Calu3 (cell line): ENCODE measurements at regions of chr6 and their contacts with region 1.

Region 1: DNA sequence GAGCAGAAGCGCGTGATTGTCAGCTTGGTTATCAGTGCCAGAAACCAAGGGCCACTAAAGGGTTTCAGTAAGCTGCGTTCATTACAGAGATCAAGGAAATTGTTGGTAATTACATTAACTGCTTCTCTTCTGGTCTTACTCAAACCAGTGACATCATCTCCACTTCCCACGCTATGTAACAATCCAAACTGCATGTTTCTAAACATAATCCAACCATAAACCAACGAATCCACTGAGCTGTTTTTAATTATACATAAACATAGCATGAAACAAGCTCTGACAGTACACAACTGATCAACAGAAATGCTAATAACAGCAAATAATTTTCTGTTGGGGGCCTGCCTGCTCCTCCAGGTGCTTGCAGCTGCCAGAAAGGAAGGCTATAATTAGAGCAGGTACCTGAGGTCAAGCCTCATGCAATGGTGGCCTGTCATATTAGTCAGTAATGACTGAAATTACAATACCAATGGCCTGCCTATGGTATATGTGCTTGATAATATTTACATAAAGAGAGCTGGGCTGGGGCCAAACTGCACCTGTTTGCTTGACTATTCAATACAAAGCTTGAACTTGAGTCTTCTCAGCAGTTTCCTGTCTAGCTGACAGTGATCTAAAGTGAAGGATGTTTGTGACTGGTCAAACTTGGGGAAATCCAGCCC is 40.1 kb downstream of the ILRUN start:
- DNase-seq: peak; percentile 39
- H3K4me3 Mint-ChIP-seq: peak overlapping the region; percentile 69
- H3K27ac Mint-ChIP-seq: peak overlapping the region; percentile 90
- H3K4me1 Mint-ChIP-seq: peaks cover 42% of the 10 kb centered on the region
- H3K27me3 Mint-ChIP-seq: no peaks in the 10 kb centered on the region
- CTCF ChIP-seq: no peak

Region 2: DNA sequence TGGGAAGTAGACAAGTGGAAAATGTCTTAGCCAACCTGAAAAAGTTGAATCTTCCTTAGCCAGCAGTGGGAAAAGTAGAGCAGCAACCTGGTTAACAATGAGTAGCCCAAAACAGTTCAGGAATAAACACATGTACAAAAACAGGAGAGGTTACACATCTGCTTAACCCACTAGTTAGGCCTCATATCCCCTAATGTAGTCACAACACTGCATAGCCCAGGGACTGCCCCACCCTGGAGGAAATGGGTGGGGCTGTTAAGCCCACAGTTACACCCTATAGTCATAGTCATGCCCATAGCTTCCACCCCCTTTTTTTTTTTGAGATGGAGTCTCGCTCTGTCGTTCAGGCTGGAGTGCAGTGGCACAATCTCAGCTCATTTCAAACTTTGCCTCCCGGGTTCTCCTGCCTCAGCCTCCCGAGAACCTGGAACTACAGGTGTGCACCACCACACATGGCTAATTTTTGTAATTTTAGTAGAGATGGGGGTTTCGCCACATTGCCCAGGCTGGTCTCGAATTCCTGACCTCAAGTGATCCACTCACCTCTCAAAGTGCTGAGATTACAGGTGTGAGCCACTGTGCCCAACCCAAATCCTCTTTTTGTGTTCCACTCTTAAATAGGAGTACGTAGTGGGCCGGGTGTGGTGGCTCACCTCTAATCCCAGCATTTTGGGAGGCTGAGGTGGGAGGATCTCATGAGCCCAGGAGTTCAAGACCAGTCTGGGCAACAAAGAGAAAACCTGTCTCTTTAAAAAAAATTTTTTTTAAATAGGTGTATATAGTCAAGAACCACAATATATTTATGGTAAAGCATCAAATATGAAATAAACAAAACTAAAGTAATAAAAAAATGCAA is 15.5 kb after region 1 on chr6:
- CTCF ChIA-PET with region 1: interaction called, 18 read pairs
- intact Hi-C with region 1: no loop called
- DNase-seq: peak; percentile 47
- H3K4me3 Mint-ChIP-seq: no peak overlapping the region
- H3K27ac Mint-ChIP-seq: peak overlapping the region; percentile 61
- H3K4me1 Mint-ChIP-seq: peaks cover 56% of the 10 kb centered on the region
- H3K27me3 Mint-ChIP-seq: no peaks in the 10 kb centered on the region
- CTCF ChIP-seq: no peak

Region 3: GRCh38 chr6:34689737-34690136 is 33.2 kb after region 1 on chr6:
- CTCF ChIA-PET with region 1: no interaction called
- intact Hi-C with region 1: loop called (anchors 5 kb)
- DNase-seq: no peak
- H3K4me3 Mint-ChIP-seq: no peak overlapping the region
- H3K27ac Mint-ChIP-seq: no peak overlapping the region
- H3K4me1 Mint-ChIP-seq: peaks cover 24% of the 10 kb centered on the region
- H3K27me3 Mint-ChIP-seq: no peaks in the 10 kb centered on the region
- CTCF ChIP-seq: no peak

Region 4: GRCh38 chr6:34696739-34697543 is 40.4 kb after region 1 on chr6 and contains the start of gene ILRUN:
- CTCF ChIA-PET with region 1: interaction called, 11 read pairs
- intact Hi-C with region 1: loop called (anchors 5 kb)
- DNase-seq: peak; percentile 100
- H3K4me3 Mint-ChIP-seq: peak within 1 kb of the TSS; percentile 92
- H3K27ac Mint-ChIP-seq: peak within 1 kb of the TSS; percentile 71
- H3K4me1 Mint-ChIP-seq: peaks cover 29% of the 10 kb centered on the region
- H3K27me3 Mint-ChIP-seq: no peaks in the 10 kb centered on the region
- CTCF ChIP-seq: no peak
- total RNA-seq, gene ILRUN: 137 and 145 TPM in 2 replicates